ENCODE measurements at regions of chr16 and their contacts with region 1.

Region 1: DNA sequence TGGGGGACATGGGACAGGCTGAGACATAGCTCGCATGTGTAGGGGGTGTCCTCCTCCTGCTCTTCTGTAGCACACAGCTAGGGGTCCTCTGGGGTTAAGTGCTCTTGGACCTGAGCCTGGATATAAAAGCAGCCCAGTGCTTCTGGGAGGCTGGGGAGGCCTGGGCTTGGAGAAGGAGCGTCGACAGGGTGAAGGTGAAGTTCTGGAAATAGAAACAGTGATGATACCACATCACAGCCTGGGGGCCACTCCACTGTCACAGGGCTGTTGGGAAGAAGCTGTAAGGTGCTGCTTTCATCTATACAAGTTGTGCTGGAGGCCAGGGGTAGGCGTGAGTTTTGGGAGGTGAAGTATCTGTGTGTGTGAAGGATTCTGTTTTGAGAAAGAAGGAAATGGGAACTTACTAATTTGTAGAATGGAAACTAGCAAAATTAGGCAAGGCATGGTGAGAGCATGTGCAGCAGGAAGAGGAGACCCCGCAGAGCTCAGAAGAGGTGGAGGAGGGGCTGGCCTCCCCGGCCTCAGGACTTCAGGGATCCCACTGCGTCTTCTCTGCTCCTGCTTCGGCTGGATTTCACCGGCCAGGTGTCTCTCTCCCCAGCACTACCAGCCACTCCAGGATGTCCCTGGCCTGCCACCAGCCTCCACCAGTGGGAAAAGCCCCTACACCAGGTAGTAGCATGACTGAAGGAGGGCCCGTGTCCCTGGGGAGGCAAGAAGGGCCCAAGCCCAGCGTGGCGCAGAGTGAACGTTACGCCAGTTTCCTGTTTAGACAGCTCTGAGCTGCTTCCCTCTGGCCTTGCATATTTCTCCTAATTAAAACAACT is 19.4 kb downstream of the PLCG2 start:
- DNase-seq: peak; percentile 78
- CTCF ChIP-seq: no peak

Region 2: GRCh38 chr16:81513204-81514040 is 285.1 kb before region 1 on chr16:
- CTCF ChIA-PET with region 1: no interaction called
- POLR2A ChIA-PET with region 1: no interaction called
- DNase-seq: no peak
- CTCF ChIP-seq: no peak

Region 3: DNA sequence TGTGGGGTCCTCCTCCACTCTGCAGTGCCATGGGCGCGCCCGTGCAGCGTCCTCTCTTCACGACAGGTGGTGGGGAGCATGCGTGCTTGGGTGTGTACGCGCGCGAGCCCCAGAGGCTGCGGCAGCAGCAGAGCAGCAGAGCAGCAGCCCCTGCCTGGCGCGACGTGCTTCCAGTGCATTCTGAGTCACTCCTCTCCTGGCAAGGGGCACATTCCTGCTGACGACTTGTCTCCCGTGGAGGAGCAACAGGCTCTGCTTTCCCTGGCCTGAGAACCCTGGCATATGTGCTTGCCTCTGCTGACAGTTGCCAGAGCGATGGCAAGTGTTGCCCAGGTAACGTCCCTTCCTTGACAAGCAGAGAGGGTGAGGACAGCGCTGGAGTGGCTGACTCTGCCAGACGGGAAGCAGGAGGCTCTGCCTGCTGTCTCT is 153.2 kb before region 1 on chr16:
- CTCF ChIA-PET with region 1: no interaction called
- POLR2A ChIA-PET with region 1: no interaction called
- DNase-seq: no peak
- CTCF ChIP-seq: no peak

Region 4: DNA sequence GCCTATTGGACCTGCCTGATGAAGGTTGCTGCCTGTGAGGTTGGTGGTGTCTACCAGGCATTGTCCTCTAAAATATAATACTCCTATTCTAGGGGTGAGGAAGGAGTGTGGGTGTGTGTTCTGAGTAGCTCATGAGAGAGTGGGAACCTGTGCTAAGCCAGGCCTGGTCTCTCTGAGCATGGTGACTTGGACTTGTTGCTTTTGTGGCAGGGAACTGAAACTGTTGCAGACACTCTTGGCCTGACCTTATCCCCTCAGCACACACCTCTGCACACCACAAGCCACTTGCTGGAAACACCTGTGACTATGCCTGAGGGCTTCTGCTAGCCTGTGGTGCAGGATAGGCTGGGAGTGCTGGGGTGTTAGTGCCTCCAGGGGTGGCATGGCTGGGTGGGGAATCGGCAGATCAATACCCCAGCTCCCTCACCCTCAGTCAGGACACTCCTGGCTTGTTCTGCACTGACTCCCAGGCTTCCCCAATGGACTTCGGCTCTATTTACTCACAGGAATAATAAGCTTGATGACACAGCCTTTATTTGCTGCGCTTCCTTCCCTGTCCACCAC is 10.5 kb after region 1 on chr16:
- CTCF ChIA-PET with region 1: interaction called, 11 read pairs
- POLR2A ChIA-PET with region 1: interaction called, 15 read pairs
- DNase-seq: peak; percentile 73
- CTCF ChIP-seq: no peak

Region 5: DNA sequence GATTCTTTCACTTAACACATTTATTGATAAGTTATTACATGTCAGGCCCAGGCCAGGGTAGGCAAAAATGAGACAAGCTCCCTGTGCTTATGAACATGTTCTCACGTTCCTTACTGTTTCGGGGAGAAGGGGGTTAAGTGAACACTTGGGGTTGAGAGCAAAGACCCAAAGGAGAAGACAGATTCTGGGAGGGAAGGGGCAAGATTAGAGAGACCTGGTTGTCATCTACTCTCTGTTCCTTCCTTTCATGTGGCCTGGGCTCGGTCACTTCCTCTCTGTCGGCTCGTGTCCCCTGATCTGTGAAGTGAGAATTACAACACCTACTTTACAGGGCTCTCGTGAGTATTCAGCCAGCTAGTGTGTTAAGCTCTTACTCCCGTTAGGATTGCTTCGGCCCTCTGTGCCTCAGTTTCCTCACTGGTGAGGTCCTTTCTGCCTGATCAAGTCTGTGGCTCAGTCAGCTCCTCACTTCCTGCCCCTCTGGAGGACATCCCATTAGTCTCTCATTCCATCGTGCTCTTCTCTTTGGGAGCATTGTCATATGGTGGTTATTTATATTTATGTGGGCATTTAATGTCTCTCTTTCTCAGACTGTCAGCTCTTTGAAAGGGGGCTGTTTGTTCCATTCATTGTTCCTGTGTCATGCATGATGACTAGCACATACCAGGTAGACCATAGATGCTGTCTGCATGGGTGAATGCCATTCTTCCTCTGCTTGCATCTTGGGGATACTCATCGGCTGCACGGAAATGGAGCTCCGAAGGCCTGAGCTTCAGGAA is 19.5 kb after region 1 on chr16:
- CTCF ChIA-PET with region 1: interaction called, 25 read pairs
- POLR2A ChIA-PET with region 1: interaction called, 23 read pairs
- DNase-seq: peak; percentile 60
- CTCF ChIP-seq: no peak

Region 6: DNA sequence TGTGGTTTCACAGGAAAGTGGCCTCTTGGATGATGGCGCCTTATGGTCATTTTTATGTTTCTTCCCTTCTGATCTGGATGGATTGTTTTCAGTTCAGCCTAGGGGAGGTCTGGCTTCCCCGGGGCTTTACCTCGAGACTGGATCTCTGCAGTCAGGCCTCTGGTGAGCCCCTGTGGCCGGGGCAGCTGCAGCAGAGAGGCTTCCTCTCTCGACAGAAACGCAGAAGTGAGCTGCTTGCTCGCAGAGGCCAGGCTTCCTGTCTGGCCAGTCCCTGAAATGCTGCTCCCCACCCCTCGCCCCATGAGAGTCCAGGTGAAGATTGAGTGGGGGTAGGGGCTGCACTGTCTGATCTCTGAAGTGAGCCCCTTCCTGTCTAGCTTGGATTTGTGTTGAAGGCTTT is 24.6 kb after region 1 on chr16:
- CTCF ChIA-PET with region 1: interaction called, 25 read pairs
- POLR2A ChIA-PET with region 1: interaction called, 23 read pairs
- DNase-seq: peak; percentile 65
- CTCF ChIP-seq: peak; percentile 4

Measured in GM10248 (cell line).